ENCODE measurements at regions of chr3 and their contacts with region 1.

Region 1: DNA sequence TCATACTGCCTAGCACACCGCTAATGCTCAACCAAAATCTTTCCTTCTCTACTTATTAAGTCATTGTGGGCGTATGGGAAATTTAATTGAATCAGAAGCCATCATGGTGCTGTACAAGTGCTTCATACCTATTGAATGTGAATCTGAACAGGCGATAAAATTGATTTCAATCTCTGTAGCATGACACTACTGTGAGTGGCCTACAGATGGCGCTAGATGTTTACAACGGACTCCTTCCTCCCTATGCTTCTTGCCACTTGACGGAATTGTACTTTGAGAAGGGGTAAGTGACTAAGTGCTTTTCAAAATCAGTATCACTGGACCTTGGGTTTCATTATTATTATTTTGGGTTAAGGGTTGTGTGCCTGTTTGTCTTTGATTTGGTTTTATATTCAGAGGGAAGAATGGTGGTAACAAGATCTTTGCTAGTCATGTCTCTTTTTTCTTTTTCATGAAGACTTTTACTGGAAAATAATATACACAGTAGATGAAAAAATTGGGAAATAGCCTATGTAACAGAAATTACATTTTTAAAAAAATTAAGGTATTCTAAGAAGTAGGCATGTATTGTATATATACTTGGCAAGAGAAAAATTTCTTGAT is 35.4 kb downstream of the ACP3 start:
- DNase-seq: peak; percentile 62 to 65 (median 64)
- ATAC-seq: peak; percentile 79
- H3K4me3 ChIP-seq: no peak overlapping the region
- H3K27ac ChIP-seq: no peak overlapping the region
- H3K4me1 ChIP-seq: no peaks in the 10 kb centered on the region
- H3K27me3 ChIP-seq: peaks cover 0 to 5% of the 10 kb centered on the region in 2 experiments; a peak in 1 of 5 replicates
- CTCF ChIP-seq: peak; percentile 68 to 77 (median 75)
- EP300 ChIP-seq: no peak
- POLR2A ChIP-seq: no peak
- RAD21 ChIP-seq: peak; percentile 78 to 83

Region 2: DNA sequence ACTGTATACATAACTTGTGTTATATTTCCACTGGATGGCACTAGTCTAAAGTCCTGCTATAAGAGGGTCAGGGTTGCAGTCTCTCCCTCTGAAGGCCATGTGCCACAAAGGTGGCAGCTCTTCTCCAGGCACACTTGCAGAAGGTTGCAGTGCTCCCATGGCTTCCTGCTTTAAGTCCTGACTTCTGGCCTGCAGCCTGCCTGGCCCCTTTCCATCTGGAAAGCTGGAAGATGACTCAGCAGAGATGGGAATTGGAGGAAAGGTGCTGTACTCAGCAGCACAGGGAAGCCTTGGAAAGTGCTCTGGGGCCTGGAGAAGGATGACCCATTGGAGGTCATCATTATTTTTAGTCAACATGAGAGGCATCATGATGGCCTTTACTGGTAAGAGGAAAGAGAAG is 808.9 kb before region 1 on chr3:
- CTCF ChIA-PET with region 1: no interaction called
- POLR2A ChIA-PET with region 1: no interaction called
- in situ Hi-C with region 1: no loop called
- intact Hi-C with region 1: no loop called
- DNase-seq: no peak
- ATAC-seq: no peak
- H3K4me3 ChIP-seq: no peak overlapping the region
- H3K27ac ChIP-seq: no peak overlapping the region
- H3K4me1 ChIP-seq: no peaks in the 10 kb centered on the region
- H3K27me3 ChIP-seq: no peaks in the 10 kb centered on the region
- CTCF ChIP-seq: no peak
- EP300 ChIP-seq: no peak
- POLR2A ChIP-seq: no peak
- RAD21 ChIP-seq: no peak

Region 3: DNA sequence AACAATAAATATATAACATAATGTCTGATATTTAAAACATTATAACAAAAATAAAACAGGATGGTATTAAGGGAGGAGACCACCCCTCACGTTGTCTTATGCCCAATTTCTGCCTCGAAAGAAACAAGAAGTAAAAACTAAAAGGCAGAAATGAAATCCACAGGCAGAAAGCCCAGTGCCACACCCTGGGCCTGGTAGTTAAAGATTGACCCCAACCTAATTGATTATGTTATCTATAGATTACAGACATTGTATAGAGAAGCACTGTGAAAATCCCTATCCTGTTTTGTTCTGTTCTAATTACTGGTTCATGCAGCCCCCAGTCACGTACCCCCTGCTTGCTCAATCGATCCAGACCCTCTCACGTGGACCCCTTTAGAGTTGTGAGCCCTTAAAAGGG is 57.7 kb before region 1 on chr3:
- CTCF ChIA-PET with region 1: no interaction called
- POLR2A ChIA-PET with region 1: no interaction called
- in situ Hi-C with region 1: no loop called
- intact Hi-C with region 1: no loop called
- DNase-seq: no peak
- ATAC-seq: no peak
- H3K4me3 ChIP-seq: no peak overlapping the region
- H3K27ac ChIP-seq: no peak overlapping the region
- H3K4me1 ChIP-seq: no peaks in the 10 kb centered on the region
- H3K27me3 ChIP-seq: no peaks in the 10 kb centered on the region
- CTCF ChIP-seq: no peak
- EP300 ChIP-seq: no peak
- POLR2A ChIP-seq: no peak
- RAD21 ChIP-seq: no peak

Region 4: DNA sequence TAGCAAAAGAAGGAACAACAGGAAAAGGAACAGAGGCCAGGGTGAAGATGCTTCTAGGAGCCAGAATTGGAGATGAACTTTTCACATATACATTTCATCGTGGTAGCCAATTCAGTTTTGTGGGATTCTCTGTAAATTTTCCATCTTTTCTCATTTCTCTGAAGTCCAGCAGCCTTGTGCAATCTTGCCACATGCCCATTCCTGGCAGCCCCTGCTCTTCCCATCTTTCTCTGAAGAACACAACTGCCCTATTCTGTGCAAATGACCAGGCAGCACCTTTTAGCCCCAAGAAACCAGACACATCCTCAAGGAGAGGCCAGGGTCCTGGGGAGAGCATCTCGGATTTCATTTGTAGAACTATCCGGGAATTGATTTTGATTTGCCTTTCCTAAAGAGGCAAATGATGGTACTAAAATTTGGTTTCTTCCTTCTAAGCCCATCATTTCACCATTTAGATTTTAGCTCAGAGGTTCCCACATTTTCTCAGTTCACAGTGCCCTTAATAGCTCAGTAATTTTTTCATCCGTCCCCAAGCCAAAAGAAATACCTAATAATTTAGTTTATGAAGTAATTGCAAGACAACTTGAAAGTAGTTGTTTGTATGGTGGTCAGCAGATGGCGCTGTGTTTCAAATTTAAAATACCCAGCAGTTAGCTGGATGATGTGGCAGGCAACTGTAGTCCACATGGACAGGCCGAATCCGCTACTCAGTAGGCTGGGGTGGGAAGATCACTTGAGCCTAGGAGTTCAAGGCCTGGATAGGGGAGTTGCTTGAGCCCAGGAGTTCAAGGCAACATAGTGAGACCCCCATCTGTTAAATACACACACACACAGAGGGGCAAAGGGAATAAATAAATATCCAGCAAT is 183.2 kb after region 1 on chr3:
- CTCF ChIA-PET with region 1: no interaction called
- POLR2A ChIA-PET with region 1: no interaction called
- in situ Hi-C with region 1: no loop called
- intact Hi-C with region 1: loop called (anchors 5 kb)
- DNase-seq: peak; percentile 37 to 71 (median 46)
- ATAC-seq: peak; percentile 90
- H3K4me3 ChIP-seq: no peak overlapping the region
- H3K27ac ChIP-seq: peak overlapping the region; percentile 46; the same call in 1 of the 3 replicates
- H3K4me1 ChIP-seq: no peaks in the 10 kb centered on the region
- H3K27me3 ChIP-seq: no peaks in the 10 kb centered on the region
- CTCF ChIP-seq: peak; percentile 51 to 66 (median 54)
- EP300 ChIP-seq: no peak
- POLR2A ChIP-seq: no peak
- RAD21 ChIP-seq: peak; percentile 66 to 70